ENCODE measurements at regions of chr5 and their contacts with region 1.

Region 1: GRCh38 chr5:142699184-142699720 is 13.4 kb upstream of the FGF1 start:
- DNase-seq: peak; percentile 93
- H3K4me3 ChIP-seq: no peak overlapping the region
- H3K27ac ChIP-seq: no peak overlapping the region
- H3K4me1 ChIP-seq: peaks cover 40% of the 10 kb centered on the region
- H3K27me3 ChIP-seq: no peaks in the 10 kb centered on the region
- CTCF ChIP-seq: peak; percentile 95

Region 2: GRCh38 chr5:141992349-141992963 is 706.8 kb before region 1 on chr5:
- CTCF ChIA-PET with region 1: no interaction called
- POLR2A ChIA-PET with region 1: no interaction called
- intact Hi-C with region 1: loop called (anchors 5 kb)
- DNase-seq: peak; percentile 77
- H3K4me3 ChIP-seq: no peak overlapping the region
- H3K27ac ChIP-seq: no peak overlapping the region
- H3K4me1 ChIP-seq: no peaks in the 10 kb centered on the region
- H3K27me3 ChIP-seq: no peaks in the 10 kb centered on the region
- CTCF ChIP-seq: peak; percentile 89

Region 3: GRCh38 chr5:142151436-142152383 is 547.5 kb before region 1 on chr5:
- CTCF ChIA-PET with region 1: interaction called, 4 read pairs
- POLR2A ChIA-PET with region 1: no interaction called
- intact Hi-C with region 1: loop called (anchors 1 kb)
- DNase-seq: peak; percentile 88
- H3K4me3 ChIP-seq: no peak overlapping the region
- H3K27ac ChIP-seq: no peak overlapping the region
- H3K4me1 ChIP-seq: peaks cover 24% of the 10 kb centered on the region
- H3K27me3 ChIP-seq: no peaks in the 10 kb centered on the region
- CTCF ChIP-seq: peak; percentile 95

Region 4: GRCh38 chr5:142316051-142316450 is 383.2 kb before region 1 on chr5:
- CTCF ChIA-PET with region 1: no interaction called
- POLR2A ChIA-PET with region 1: no interaction called
- intact Hi-C with region 1: loop called (anchors 5 kb)
- DNase-seq: peak; percentile 98
- H3K4me3 ChIP-seq: peak overlapping the region; percentile 18
- H3K27ac ChIP-seq: peak overlapping the region; percentile 65
- H3K4me1 ChIP-seq: peaks cover 78% of the 10 kb centered on the region
- H3K27me3 ChIP-seq: no peaks in the 10 kb centered on the region
- CTCF ChIP-seq: no peak

Region 5: GRCh38 chr5:142611154-142611553 is 88.1 kb before region 1 on chr5:
- CTCF ChIA-PET with region 1: interaction called, 4 read pairs
- POLR2A ChIA-PET with region 1: no interaction called
- intact Hi-C with region 1: loop called (anchors 1 kb)
- DNase-seq: peak; percentile 73
- H3K4me3 ChIP-seq: no peak overlapping the region
- H3K27ac ChIP-seq: no peak overlapping the region
- H3K4me1 ChIP-seq: peaks cover 13% of the 10 kb centered on the region
- H3K27me3 ChIP-seq: no peaks in the 10 kb centered on the region
- CTCF ChIP-seq: peak; percentile 82

Region 6: DNA sequence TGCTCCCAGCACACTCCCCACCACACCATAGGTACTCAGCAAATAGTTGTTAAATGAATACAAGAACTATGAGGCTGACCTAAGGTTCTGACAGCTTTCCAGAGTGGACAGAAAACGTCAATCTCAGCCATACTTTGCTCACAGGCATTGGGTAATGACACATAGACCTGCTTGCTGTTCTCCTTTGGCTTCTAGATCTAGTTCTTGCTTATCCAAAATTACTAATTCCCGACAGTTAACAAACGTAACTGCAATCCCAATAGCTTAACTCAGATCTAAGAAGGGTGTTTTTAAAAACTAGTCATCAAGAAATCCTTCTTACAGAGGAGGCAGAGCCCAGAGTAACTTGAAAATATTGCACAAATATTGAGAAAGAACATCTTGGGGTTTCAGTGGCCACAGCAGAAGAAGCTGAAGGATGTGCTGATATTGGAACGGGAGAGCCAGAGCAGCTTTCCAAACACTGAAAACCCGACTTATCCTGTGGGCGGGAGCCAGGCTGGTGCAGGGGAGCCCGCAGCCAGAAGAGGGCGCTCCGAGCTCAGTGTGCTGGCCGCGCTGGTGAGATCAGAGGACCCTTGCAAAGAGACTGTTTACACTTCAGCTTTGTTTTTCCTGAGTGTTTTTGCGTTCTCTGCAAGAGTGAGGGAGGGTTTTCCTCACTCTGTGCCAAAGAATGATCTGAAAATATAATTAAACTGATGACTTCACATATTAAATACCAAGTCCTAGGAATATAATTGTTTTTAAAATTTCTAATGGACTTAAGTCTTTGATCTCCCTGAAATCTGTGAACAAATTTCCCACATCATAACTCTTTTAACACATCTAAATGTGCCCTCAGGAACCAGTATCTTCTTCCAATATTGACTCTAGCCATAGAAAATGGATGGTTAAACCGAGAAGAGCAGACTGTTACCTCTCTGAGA is 43.6 kb before region 1 on chr5:
- CTCF ChIA-PET with region 1: interaction called, 75 read pairs
- POLR2A ChIA-PET with region 1: no interaction called
- intact Hi-C with region 1: loop called (anchors 1 kb)
- DNase-seq: peak; percentile 88
- H3K4me3 ChIP-seq: no peak overlapping the region
- H3K27ac ChIP-seq: no peak overlapping the region
- H3K4me1 ChIP-seq: peaks cover 14% of the 10 kb centered on the region
- H3K27me3 ChIP-seq: no peaks in the 10 kb centered on the region
- CTCF ChIP-seq: peak; percentile 99

Region 7: DNA sequence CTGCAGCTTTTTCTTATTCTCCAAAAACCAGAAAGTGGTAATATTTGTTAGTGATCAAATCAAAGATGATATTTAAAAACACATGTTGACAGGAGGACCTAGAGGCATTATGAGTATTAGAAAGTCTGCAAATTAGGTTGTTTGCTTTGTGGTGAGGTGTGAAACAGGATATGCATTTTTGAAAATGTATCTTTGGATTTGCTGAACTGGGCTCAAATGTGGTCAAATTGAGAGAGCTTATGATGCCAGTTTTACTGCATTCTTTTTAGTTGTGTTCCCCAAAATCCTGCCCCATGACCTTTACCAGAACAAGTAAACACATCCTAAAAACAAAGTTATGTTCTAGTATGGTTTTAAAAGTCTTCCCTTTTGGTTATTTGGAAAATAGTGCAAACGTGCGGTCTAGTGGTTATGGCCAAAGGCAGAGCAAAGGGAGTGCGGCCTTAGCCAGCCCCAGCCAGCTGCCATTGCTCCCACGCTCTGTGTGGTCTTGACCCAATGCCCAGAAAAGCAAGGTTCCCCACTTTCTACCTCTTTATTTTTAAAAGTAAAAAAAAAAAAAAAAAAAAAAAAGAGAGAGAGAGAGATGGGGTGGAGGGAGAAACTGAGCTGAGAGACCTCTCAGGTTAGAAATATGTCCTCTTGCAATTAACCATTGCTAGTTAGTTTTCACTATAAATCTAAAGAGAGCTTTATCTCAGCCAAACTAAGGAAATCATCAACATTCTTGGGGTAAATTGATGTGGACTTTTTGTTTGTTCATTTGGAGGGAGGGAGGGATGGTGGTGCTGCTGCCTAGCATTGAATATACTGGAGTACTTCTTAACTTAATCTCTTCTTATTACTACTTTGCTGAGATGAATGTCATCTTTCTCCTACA is 247.5 kb after region 1 on chr5:
- CTCF ChIA-PET with region 1: interaction called, 12 read pairs
- POLR2A ChIA-PET with region 1: no interaction called
- intact Hi-C with region 1: no loop called
- DNase-seq: no peak
- H3K4me3 ChIP-seq: no peak overlapping the region
- H3K27ac ChIP-seq: no peak overlapping the region
- H3K4me1 ChIP-seq: no peaks in the 10 kb centered on the region
- H3K27me3 ChIP-seq: no peaks in the 10 kb centered on the region
- CTCF ChIP-seq: no peak

Measured in A673 (cell line).